A549 (cell line): ENCODE measurements at regions of chr15 and their contacts with region 1.

Region 1: GRCh38 chr15:73972984-73973682 is 19.0 kb downstream of the STOML1 start:
- DNase-seq: peak; percentile 62 to 70
- ATAC-seq: peak; percentile 96
- H3K4me3 ChIP-seq: no peak overlapping the region
- H3K27ac ChIP-seq: peak overlapping the region; percentile 58 to 80; a peak in 5 of 6 replicates
- H3K4me1 ChIP-seq: no peaks in the 10 kb centered on the region
- CTCF ChIP-seq: peak; percentile 73
- EP300 ChIP-seq: no peak
- POLR2A ChIP-seq: no peak
- RAD21 ChIP-seq: peak; percentile 88 to 89

Region 2: GRCh38 chr15:73809733-73810501 is 163.2 kb before region 1 on chr15:
- CTCF ChIA-PET with region 1: no interaction called
- POLR2A ChIA-PET with region 1: no interaction called
- DNase-seq: peak in 1 of 2 experiments; percentile 21
- ATAC-seq: peak; percentile 68 to 72
- H3K4me3 ChIP-seq: no peak overlapping the region
- H3K27ac ChIP-seq: no peak overlapping the region
- H3K4me1 ChIP-seq: peaks cover 5% of the 10 kb centered on the region; the same call in 1 of the 3 replicates
- CTCF ChIP-seq: no peak
- EP300 ChIP-seq: no peak
- POLR2A ChIP-seq: no peak
- RAD21 ChIP-seq: no peak

Region 3: DNA sequence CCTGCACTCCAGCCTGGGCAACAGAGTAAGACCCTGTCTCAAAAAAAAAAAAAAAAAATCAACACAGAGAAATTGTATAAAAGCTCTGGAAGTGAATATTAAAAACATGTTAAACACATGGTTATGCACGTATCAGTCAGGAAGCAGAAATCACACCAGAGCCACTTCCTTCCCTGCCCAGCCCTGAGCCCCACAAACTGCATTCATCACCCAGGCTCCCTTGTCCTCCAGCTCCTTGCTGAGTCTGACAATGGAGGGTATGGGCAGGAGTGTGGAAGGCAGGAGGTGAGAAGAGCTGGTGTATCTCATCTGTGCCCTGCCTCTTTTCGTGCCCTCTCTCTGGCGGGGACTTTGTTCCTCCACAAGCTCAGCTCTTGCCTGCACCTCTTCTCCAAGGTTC is 59.0 kb before region 1 on chr15:
- CTCF ChIA-PET with region 1: no interaction called
- POLR2A ChIA-PET with region 1: no interaction called
- DNase-seq: no peak
- ATAC-seq: no peak
- H3K4me3 ChIP-seq: no peak overlapping the region
- H3K27ac ChIP-seq: no peak overlapping the region
- H3K4me1 ChIP-seq: no peaks in the 10 kb centered on the region
- CTCF ChIP-seq: no peak
- EP300 ChIP-seq: no peak
- POLR2A ChIP-seq: no peak
- RAD21 ChIP-seq: no peak

Region 4: DNA sequence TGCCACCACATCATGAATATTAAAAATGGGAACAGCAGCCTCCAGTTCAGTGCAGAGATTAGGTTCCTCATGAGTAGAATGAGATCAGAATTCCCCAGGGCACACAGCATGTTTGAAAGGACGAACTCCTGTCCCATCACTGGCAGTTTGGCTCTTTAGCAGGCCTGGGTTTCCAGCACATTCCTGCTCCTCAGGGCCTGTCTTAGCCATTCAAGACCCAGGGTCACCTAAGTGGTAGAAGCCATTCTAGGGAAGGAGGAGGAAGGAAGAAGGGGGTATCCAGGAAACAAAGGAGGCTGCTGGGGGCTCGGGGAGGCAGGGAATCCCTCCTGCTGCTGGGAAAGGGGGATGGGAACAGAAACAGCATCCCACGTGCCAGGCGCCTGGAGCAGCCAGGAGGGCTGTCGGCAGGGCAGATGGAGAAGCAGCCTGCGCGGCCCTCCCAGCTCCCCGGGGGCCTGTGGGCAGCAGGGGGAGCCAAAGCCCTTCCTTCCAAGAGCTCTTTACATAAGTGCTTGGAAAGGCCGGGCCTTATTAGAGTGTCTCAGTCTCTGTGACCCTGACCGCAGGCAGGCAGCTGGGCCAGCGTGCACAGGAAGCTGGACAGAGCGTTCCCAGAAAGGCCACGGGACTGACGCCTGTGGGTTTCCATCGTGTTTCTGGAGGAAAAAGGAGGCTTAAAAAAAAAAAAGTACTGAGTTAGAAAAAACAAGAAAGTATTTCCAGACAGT is 22.1 kb before region 1 on chr15:
- CTCF ChIA-PET with region 1: interaction called, 64 read pairs
- POLR2A ChIA-PET with region 1: no interaction called
- DNase-seq: peak; percentile 80
- ATAC-seq: peak; percentile 94 to 99
- H3K4me3 ChIP-seq: no peak overlapping the region
- H3K27ac ChIP-seq: peak overlapping the region in 1 of 2 experiments; percentile 73; a peak in 3 of 6 replicates
- H3K4me1 ChIP-seq: no peaks in the 10 kb centered on the region
- CTCF ChIP-seq: peak; percentile 58
- EP300 ChIP-seq: no peak
- POLR2A ChIP-seq: no peak
- RAD21 ChIP-seq: peak; percentile 64 to 71

Region 5: DNA sequence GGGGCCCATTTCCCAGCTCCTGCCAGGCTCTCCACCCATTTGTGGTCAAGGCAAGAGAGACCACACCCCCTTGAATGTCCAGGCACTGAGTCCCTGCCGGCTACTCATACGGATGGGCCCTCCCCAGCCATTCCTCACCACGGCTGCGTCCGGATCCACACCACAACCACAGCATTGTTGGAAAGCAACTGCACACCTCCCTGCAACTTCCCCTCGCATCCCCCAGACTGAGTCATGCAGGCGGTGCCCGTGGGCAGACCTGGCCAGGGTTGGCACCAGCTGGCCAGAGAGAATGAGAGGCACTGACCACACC is 16.4 kb before region 1 on chr15:
- CTCF ChIA-PET with region 1: interaction called, 64 read pairs
- POLR2A ChIA-PET with region 1: no interaction called
- DNase-seq: peak in 1 of 2 experiments; percentile 20
- ATAC-seq: peak; percentile 58; a peak in 5 of 6 replicates
- H3K4me3 ChIP-seq: no peak overlapping the region
- H3K27ac ChIP-seq: peak overlapping the region in 1 of 2 experiments; percentile 53; a peak in 2 of 6 replicates
- H3K4me1 ChIP-seq: peaks cover 12% of the 10 kb centered on the region
- CTCF ChIP-seq: no peak
- EP300 ChIP-seq: no peak
- POLR2A ChIP-seq: no peak
- RAD21 ChIP-seq: no peak

Region 6: GRCh38 chr15:73991726-73992593 is 18.8 kb after region 1 on chr15 and contains the start of gene STOML1:
- CTCF ChIA-PET with region 1: interaction called, 46 read pairs
- POLR2A ChIA-PET with region 1: no interaction called
- DNase-seq: peak; percentile 87 to 91
- ATAC-seq: peak; percentile 86 to 89
- H3K4me3 ChIP-seq: peak within 1 kb of the TSS; percentile 83
- H3K27ac ChIP-seq: peak within 1 kb of the TSS; percentile 68 to 88
- H3K4me1 ChIP-seq: peaks cover 33% of the 10 kb centered on the region
- CTCF ChIP-seq: peak; percentile 61
- EP300 ChIP-seq: no peak
- POLR2A ChIP-seq: 0 out of 2 replicates have a peak, but pooled peaks have one; percentile 9
- RAD21 ChIP-seq: no peak
- polyA plus RNA-seq, gene STOML1: 3.5 and 4.3 TPM in 2 replicates

Region 7: DNA sequence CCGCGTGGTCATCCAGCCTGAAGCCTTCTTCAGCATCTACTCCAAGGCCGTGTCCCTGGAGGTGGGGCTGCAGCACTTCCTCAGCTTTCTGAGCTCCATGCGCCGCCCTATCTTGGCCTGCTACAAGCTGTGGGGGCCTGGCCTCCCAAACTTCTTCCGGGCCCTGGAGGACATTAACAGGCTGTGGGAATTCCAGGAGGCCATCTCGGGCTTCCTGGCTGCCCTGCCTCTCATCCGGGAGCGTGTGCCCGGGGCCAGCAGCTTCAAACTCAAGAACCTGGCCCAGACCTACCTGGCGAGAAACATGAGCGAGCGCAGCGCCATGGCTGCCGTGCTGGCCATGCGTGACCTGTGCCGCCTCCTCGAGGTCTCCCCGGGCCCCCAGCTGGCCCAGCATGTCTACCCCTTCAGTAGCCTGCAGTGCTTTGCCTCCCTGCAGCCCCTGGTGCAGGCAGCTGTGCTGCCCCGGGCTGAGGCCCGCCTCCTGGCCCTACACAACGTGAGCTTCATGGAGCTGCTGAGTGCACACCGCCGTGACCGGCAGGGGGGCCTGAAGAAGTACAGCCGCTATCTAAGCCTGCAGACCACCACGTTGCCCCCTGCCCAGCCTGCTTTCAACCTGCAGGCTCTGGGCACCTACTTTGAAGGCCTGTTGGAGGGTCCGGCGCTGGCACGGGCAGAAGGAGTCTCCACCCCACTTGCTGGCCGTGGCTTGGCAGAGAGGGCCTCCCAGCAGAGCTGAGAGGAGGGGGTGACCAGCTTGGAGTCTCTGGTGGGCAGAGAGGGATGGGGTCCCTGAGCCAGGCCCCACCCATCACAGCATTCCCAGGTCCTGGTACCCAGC is 71.4 kb after region 1 on chr15:
- CTCF ChIA-PET with region 1: interaction called, 237 read pairs
- POLR2A ChIA-PET with region 1: no interaction called
- DNase-seq: no peak
- ATAC-seq: no peak
- H3K4me3 ChIP-seq: no peak overlapping the region
- H3K27ac ChIP-seq: no peak overlapping the region
- H3K4me1 ChIP-seq: peaks cover 7% of the 10 kb centered on the region; the same call in 1 of the 3 replicates
- CTCF ChIP-seq: no peak
- EP300 ChIP-seq: no peak
- POLR2A ChIP-seq: no peak
- RAD21 ChIP-seq: no peak

Region 8: GRCh38 chr15:74322181-74323076 is 349.3 kb after region 1 on chr15:
- CTCF ChIA-PET with region 1: interaction called, 11 read pairs
- POLR2A ChIA-PET with region 1: no interaction called
- DNase-seq: peak; percentile 55 to 65
- ATAC-seq: peak; percentile 93 to 95
- H3K4me3 ChIP-seq: no peak overlapping the region
- H3K27ac ChIP-seq: no peak overlapping the region
- H3K4me1 ChIP-seq: peaks cover 11% of the 10 kb centered on the region
- CTCF ChIP-seq: peak; percentile 80
- EP300 ChIP-seq: no peak
- POLR2A ChIP-seq: no peak
- RAD21 ChIP-seq: peak; percentile 85 to 93